Mammary epithelial cell (primary cell): ENCODE measurements at regions of chr11 and their contacts with region 1.

Region 1: DNA sequence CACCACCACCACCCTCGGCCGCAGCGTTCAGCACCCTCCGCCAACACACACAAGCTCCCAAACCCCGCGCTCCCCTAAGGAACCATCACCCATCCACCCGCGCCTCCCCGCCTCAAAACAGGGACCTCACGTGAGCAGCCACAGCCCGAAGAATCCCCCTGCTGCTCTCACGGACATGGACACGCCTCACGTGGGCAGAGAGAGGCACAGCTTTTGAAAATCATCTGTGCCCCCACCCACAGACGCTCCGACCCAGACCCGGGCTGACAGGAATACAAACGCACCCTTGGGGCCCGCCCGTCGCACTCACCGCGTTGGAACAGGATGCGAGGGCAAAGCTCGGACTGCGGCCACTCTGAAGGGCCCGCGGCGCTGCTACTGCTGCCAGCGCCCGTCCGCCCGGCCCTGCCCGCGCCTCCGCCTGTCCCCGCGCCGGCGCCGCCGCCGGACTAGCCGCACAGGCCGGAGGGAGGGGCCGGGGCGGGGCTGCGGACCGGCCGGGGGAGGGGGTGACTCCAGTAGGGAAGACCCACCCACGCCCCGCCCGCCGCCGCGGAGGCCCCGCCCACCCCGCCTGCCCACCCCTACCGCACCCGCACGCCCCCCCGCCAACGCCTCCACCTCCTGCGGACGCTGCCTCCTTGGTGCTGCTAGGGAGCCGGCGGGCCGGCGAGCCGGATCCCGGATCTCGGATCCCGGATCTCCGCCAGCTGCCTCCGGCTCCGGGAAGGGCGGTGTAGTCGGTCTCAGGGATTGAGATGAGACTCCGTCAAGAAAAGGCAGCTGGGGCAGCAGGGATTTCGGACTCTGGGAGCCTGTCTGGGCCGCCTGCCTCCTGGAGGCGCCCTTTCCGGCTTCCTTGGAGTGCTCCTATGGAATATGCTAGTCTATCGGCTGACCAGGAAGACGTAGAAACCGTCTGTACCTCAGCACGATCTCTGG is at the start of gene TRIM3:
- DNase-seq: peak; percentile 82
- H3K4me3 ChIP-seq: peak within 1 kb of the TSS; percentile 62 to 80 (median 70)
- H3K27ac ChIP-seq: peak within 1 kb of the TSS; percentile 66
- H3K4me1 ChIP-seq: peaks cover 17% of the 10 kb centered on the region
- H3K27me3 ChIP-seq: no peaks in the 10 kb centered on the region
- CTCF ChIP-seq: peak in 1 of 2 donors; percentile 49
- total RNA-seq, gene TRIM3: 9.3 to 20.8 TPM

Region 2: DNA sequence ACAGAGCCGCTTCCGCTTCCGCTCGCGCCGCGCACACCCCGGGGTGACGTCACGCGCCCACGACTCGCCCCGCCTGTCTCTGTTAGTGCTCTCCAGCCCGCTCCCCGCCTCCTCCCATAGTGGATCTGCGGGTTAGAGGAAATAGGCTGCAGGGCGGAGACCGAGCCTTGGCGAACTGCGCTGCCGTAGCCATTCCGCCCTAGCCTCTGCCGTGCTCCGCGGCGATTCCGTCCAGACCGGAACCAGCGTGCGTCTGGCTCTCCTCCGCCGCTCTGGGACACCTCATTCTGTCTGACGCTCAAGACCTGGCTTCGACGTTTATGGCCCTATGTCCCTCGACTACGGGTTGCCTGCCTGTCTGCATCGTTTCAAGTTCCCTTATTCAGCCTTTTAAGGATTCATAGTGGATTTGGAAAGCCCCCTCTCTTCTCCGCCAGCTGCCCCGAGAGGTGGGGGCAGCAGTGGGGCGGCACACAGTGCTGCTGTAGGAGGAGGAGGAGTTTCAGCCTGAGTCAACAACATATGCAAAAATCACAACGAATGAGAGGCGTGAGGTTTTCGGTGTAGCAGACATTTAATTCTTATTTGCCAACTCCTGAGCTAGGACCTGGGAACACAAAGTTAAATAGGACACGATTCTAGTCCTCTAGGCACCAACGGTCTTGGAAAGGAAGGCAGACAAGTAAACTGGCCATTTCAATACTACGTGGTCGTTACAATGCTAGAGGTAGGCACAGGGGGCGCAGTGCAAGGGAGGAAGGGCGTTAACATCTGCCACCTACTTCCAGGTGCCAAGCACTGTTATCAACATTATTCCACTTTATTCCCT is 138.7 kb after region 1 on chr11 and contains the start of gene TAF10:
- CTCF ChIA-PET with region 1: no interaction called
- dilution Hi-C with region 1: no loop called
- in situ Hi-C with region 1: loop called in 1 of 2 experiments (anchors 10 kb)
- intact Hi-C with region 1: no loop called
- DNase-seq: peak; percentile 95
- H3K4me3 ChIP-seq: peak within 1 kb of the TSS; percentile 63 to 73 (median 69)
- H3K27ac ChIP-seq: peak within 1 kb of the TSS; percentile 86
- H3K4me1 ChIP-seq: peaks cover 29% of the 10 kb centered on the region
- H3K27me3 ChIP-seq: no peaks in the 10 kb centered on the region
- CTCF ChIP-seq: peak; percentile 42 to 53
- total RNA-seq, gene TAF10: 26.3 to 115 TPM